Common myeloid progenitor, CD34-positive (primary cell): ENCODE measurements at regions of chr15 and their contacts with region 1.

Region 1: DNA sequence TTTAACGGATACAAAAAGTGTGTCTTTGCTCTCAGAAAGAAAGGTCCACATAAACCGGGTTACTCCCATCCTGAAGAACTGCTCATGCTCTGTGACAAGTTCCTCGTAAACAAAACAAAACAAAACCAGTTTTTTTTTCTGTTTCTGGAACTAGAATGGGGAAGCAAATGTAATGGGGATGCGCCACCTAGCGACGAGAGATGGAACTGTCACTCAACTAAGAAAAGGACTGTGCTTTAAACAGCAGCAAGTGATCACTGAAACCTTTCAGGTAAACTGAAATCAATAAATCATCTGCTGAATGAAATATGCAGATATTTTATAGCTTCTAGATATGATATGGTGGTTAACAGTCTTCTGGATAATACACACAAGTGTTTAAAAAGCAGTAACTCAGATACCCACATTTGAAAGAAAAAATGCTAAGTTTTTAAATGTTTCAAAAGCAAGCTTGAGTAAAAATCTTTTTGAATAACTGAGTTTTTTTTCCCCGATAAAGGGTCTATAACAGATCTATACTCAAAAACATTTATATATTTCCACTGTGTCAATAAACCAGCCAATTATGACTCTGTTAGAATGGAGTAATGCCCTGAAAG is 10.9 kb downstream of the TM2D3 start:
- DNase-seq: peak; percentile 80 to 91 (median 85)
- H3K4me3 ChIP-seq: no peak overlapping the region
- H3K27ac ChIP-seq: peak overlapping the region; percentile 21 to 30
- H3K4me1 ChIP-seq: peaks cover 2 to 18% (median 11%) of the 10 kb centered on the region in 4 experiments
- H3K27me3 ChIP-seq: no peaks in the 10 kb centered on the region

Region 2: GRCh38 chr15:101288908-101289513 is 352.3 kb before region 1 on chr15:
- CTCF ChIA-PET with region 1: interaction called, 54 read pairs
- POLR2A ChIA-PET with region 1: no interaction called
- DNase-seq: peak; percentile 74 to 89 (median 84)
- H3K4me3 ChIP-seq: no peak overlapping the region
- H3K27ac ChIP-seq: no peak overlapping the region
- H3K4me1 ChIP-seq: peaks cover 3 to 18% (median 12%) of the 10 kb centered on the region in 4 experiments
- H3K27me3 ChIP-seq: no peaks in the 10 kb centered on the region

Region 3: DNA sequence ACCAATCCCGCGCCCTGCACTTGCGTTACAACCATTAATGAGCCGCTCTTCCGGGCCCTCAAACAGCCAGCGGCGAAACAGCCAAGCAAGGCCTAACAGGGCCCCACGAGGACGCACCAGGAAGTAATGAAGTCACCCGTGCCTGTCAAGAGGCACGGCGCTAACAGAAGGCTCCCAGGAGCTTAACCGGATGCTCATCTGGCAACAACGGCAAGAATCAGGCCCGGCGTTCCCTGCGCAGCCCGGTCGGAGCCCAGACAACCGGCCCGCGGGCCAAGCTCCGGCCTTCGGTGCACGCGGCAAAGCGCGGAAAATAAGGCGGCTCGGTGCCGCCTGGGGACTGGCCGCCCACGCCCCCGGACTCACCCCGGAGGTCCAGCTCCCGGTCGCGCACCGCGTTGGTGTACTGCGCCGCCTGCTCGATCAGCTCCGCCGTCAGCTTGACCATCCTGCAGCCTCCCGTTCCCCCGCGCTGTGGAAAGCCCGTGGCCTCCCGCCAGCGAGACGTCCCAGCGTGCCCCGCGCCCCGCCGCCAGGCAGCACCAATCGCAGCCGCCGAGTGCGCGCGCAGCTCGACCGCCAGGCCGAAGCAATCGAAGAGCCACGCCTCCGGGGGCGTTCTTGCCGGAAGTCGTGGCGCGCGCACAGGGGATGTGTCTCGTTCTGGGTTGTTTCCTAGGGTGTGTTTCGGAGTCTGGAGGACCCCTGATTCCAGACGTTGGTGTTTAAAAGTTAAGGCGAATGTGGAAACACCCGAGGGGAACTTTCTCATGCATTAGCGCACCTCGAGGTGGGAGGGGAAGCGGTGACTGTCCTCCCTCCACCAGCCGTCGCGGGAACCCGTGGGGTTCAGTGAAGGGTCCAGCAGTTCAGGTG is 346.3 kb before region 1 on chr15 and contains the start of gene SNRPA1:
- CTCF ChIA-PET with region 1: interaction called, 54 read pairs
- POLR2A ChIA-PET with region 1: no interaction called
- DNase-seq: peak; percentile 93 to 97 (median 97)
- H3K4me3 ChIP-seq: peak within 1 kb of the TSS; percentile 88 to 96 (median 95)
- H3K27ac ChIP-seq: peak within 1 kb of the TSS; percentile 86 to 95
- H3K4me1 ChIP-seq: peaks cover 13 to 29% (median 25%) of the 10 kb centered on the region in 4 experiments
- H3K27me3 ChIP-seq: no peaks in the 10 kb centered on the region

Region 4: GRCh38 chr15:101307048-101307896 is 334.0 kb before region 1 on chr15:
- CTCF ChIA-PET with region 1: interaction called, 34 read pairs
- POLR2A ChIA-PET with region 1: no interaction called
- DNase-seq: no peak
- H3K4me3 ChIP-seq: no peak overlapping the region
- H3K27ac ChIP-seq: no peak overlapping the region
- H3K4me1 ChIP-seq: no peaks in the 10 kb centered on the region
- H3K27me3 ChIP-seq: peaks cover 0 to 66% (median 10%) of the 10 kb centered on the region in 5 experiments

Region 5: DNA sequence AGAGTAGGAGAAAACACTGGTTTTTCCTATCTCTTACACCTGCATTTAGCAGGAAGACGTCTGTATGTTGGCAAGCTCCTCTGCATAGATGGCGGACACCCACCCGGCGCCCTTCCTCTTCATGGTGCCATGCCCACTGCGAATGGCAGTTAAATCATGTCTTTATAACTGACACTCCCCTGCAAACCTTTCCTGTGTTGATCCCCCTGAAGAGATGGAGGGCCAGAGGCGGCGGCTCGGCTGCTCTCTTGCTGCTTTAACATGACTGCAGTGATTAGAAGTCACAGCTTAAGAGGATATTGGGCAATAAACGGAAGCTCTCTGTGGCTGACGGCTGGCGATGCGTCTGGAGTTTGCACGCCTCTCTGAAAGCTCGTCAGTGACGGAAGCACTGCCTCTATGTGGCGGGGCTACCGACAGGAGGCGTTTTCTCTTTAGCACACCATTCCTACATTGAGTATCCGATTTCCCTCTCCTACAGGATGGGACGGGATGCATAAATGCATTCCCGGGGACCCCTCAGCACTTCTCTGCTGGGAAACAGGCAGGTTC is 320.7 kb before region 1 on chr15:
- CTCF ChIA-PET with region 1: interaction called, 25 read pairs
- POLR2A ChIA-PET with region 1: interaction called, 4 read pairs
- DNase-seq: peak; percentile 91 to 97 (median 96)
- H3K4me3 ChIP-seq: peak overlapping the region in 1 of 7 experiments; percentile 48
- H3K27ac ChIP-seq: no peak overlapping the region
- H3K4me1 ChIP-seq: peaks cover 0 to 17% (median 12%) of the 10 kb centered on the region in 4 experiments
- H3K27me3 ChIP-seq: peaks cover 0 to 88% (median 25%) of the 10 kb centered on the region in 5 experiments

Region 6: DNA sequence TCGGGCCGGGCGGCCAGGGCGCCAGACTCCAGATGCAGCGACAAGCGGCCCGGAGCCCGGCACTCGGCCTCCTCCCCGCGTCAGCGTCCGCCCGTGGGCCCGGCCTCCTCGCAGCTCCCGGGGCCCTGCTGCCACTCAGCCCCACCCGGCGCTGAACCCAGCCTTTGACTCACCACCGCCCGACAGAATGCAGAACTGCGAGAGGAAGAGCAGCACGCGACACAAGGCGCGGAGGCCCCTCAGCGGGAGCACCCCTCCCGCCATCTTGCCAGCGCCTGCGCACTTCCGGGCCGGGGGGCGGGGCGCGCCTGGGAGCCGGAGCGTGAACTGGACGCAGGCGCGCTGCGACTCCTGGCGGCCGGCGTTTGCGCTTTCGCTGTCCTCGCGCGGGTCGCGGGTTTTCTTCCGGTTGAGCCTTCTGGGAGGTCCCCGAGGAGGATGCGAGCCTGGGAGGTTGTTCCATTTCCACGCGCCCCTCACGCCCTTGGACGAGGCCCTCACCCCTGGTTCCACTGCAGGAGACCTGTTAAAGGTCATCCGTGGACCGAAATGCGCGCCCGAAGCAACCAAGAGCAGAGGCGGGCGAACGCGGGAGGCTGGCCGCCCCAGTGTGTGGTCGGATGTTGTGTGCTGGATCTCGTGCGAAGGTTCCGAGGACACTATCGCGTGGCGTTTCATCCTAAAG is 11.0 kb after region 1 on chr15 and contains the start of gene TM2D3:
- CTCF ChIA-PET with region 1: interaction called, 16 read pairs
- POLR2A ChIA-PET with region 1: interaction called, 3 read pairs
- DNase-seq: peak; percentile 95 to 97 (median 97)
- H3K4me3 ChIP-seq: peak within 1 kb of the TSS; percentile 78 to 93 (median 89)
- H3K27ac ChIP-seq: peak within 1 kb of the TSS; percentile 90 to 97
- H3K4me1 ChIP-seq: peaks cover 12 to 28% (median 18%) of the 10 kb centered on the region in 4 experiments
- H3K27me3 ChIP-seq: no peaks in the 10 kb centered on the region